Left cardiac atrium (tissue), 4 donors: ENCODE measurements at regions of chr2 and their contacts with region 1.

Region 1: GRCh38 chr2:219736209-219736608 is 108.8 kb downstream of the SLC4A3 start:
- DNase-seq: no peak
- ATAC-seq: peak; percentile 71 to 80

Region 2: DNA sequence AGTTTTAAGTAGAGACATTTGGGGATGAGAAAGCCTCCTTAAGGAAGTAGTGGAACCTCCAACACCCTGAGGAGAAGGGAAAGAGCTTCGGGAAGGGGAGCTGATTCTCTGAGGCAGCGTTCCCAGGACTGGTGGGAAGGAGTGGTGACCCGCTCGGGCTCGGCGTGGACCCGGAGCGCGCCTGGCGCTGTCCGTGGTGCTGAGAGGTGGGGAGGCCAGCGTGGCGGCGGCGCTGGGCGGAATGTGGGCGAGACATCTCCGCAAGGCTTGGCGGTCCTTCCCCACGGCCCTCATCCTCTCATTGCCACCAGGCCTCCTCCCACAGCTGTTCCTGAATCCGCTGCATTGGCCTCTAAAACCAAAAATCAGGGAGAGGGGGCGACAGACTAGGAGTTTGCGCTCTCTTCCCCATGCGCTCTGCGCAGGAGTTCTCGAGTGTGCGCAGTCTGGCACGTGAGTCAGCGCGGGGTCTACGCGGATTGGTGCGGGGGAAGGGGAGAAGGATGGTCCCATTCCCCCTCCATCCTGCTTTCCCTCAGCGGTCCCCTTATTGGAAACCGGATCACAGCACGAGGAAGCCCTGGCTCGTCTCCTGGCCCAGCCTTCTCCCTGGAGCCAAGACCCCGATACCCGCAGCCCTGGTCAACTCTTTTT is 404.5 kb before region 1 on chr2:
- intact Hi-C with region 1: no loop called
- DNase-seq: peak; percentile 49
- ATAC-seq: peak; percentile 61 to 79

Region 3: DNA sequence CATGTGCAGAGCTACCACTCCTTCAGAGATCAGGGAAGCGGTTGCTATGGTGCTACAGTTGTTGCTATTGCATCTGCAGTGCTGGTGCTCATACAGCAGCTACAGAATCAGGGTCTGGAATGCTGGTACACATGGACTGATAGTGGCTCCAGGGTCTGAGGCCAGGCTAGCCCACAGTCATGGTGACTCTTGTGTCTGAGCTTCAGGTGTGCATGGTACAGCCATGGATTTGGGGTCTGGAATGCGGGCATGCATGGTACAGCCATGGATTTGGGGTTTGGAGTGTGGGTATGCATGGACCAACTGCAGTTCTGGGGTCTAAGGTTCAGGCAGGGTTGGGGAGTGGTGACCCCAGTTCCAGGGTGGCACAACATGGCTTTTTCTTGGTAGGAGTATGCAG is 76.5 kb after region 1 on chr2:
- intact Hi-C with region 1: no loop called
- DNase-seq: no peak
- ATAC-seq: no peak

Region 4: GRCh38 chr2:219836647-219837177 is 100.5 kb after region 1 on chr2:
- intact Hi-C with region 1: loop called (anchors 2 to 5 kb)
- DNase-seq: no peak
- ATAC-seq: no peak

Region 5: GRCh38 chr2:219886615-219887014 is 150.4 kb after region 1 on chr2:
- intact Hi-C with region 1: no loop called
- DNase-seq: no peak
- ATAC-seq: no peak